Heart right ventricle (tissue), 16 donors: ENCODE measurements at regions of chr3 and their contacts with region 1.

Region 1: DNA sequence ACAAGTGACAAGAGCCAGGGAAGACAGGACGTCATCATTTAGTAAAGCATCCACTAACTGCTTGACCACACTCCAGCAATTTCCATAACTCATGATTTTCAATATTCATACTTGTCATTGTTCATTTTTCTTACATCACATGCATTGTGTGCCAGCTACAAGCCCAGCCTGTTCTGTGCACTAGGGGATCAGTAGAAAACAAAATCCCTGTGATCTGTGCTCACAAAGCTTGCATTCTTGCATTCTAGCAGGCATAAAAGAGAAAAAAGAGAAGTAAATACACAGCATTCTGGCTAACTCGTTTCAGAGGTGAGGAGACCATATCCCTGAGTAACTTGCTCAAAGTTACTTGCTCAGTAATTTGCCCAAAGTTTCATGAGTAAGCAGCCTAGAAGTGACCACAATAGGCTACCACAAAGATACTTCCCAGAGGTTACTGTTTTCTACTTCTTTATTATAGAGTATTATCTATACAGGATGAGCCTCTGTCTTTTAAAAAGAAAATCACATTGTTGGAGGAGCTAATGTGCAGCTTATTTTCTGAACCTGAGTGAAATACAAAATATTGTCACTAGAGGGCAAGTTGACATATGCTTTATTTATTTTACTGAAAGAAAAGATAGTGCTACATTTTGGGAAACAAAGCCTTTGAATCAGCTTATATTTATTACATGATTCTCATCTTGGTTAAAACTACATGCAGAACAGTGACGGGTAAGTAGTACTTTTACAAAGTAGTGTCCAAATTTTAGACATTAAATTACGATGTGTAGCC is 701.4 kb upstream of the LMCD1 start:
- DNase-seq: no peak
- ATAC-seq: no peak
- H3K4me3 ChIP-seq: no peak overlapping the region
- H3K27ac ChIP-seq: no peak overlapping the region
- H3K4me1 ChIP-seq: no peaks in the 10 kb centered on the region
- H3K27me3 ChIP-seq: peaks cover 0 to 6% (median 0%) of the 10 kb centered on the region in 7 donors
- CTCF ChIP-seq: peak in 8 of 9 donors; percentile 9 to 47 (median 31)

Region 2: GRCh38 chr3:7841451-7841850 is 41.3 kb after region 1 on chr3:
- intact Hi-C with region 1: no loop called
- DNase-seq: no peak
- ATAC-seq: no peak
- H3K4me3 ChIP-seq: no peak overlapping the region
- H3K27ac ChIP-seq: no peak overlapping the region
- H3K4me1 ChIP-seq: no peaks in the 10 kb centered on the region
- H3K27me3 ChIP-seq: no peaks in the 10 kb centered on the region
- CTCF ChIP-seq: no peak

Region 3: DNA sequence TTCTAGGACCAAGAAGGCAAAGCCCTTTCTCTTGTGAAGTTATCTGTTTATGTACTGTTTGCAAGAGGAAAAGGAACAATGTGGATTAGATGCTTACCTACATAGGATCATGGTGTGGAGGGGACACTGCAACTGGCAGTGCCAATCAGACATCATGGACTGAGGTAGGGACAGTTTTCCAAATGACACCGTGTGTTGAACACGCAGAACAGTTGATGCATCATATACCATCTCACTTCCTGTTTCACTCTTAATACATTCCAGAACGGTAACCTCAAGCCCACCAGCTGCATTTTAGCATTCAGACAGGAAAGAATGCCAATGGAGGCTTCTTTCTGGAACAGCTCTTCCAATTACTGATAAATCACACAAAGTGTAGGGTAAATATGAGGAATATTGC is 303.8 kb after region 1 on chr3:
- intact Hi-C with region 1: loop called in 1 of 10 experiments (anchors 10 kb)
- DNase-seq: no peak
- ATAC-seq: no peak
- H3K4me3 ChIP-seq: no peak overlapping the region
- H3K27ac ChIP-seq: no peak overlapping the region
- H3K4me1 ChIP-seq: no peaks in the 10 kb centered on the region
- H3K27me3 ChIP-seq: no peaks in the 10 kb centered on the region
- CTCF ChIP-seq: no peak

Region 4: DNA sequence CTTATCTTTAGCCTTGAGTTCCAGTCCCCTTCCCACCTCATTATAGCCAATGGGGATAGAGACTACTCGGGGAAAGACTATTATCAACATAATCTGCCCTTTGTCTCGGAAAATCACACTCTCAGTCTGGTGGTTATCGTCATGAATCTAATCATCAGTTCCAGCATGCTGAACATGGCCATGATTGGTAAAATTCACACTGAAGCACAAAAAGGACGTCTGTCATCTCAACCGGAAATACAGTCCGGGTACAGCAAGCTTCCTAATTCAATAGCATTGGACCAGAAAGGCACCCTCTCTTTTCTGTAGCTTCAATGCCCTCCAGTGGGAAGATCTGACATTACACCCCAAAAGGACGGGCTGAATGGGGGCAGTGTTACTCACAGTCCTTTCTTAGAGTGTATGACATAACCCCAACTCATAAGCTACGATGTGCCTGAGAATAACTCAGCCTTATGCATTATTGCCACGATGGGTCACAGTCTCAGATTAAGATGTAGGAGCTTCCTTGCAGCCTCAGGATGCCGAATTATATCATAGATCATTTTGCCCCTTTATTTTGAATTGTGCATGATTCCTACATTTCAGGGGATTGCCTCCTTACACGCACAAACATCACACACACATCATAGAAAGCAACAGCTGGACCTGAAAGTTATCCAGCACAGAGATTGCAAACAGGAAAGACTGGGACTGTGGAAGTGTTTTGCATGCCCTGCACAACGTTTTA is 311.0 kb after region 1 on chr3:
- intact Hi-C with region 1: loop called in 6 of 10 experiments (anchors 5 to 10 kb)
- DNase-seq: peak in 1 of 2 donors; percentile 61
- ATAC-seq: peak; percentile 69 to 97 (median 94)
- H3K4me3 ChIP-seq: peak overlapping the region in 7 of 10 donors; percentile 8 to 40 (median 23)
- H3K27ac ChIP-seq: no peak overlapping the region
- H3K4me1 ChIP-seq: peaks cover 0 to 11% (median 4%) of the 10 kb centered on the region in 9 donors
- H3K27me3 ChIP-seq: no peaks in the 10 kb centered on the region
- CTCF ChIP-seq: peak; percentile 49 to 85 (median 75)